ENCODE measurements at regions of chr20 and their contacts with region 1.

Region 1: DNA sequence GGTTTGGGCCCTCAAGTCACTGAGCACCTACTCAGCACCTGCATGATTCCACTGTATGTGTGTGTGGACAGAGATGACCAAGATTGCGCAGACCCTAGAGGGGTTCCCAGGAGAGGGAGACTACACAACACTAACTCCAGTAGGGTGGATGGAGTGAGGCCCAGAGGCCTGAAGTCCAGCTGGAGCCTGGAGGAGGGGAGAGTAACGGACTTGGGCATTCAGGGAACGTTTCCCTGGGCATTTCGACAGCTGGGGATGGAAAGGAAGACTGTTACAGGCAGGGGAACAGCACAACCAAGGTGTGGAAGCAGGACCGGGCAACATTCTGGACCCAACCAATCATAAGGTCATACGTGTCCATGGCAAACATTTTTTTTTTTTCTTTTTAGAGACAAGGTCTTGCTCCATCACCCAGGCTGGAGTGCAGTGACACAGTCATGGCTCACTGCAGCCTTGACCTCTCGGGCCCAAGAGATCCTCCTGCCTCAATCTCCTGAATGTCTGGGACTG is 11.1 kb upstream of the CEBPB start:
- DNase-seq: no peak
- H3K4me3 ChIP-seq: no peak overlapping the region
- H3K27ac ChIP-seq: no peak overlapping the region
- H3K4me1 ChIP-seq: no peaks in the 10 kb centered on the region
- H3K27me3 ChIP-seq: no peaks in the 10 kb centered on the region
- CTCF ChIP-seq: no peak
- POLR2A ChIP-seq: no peak

Region 2: GRCh38 chr20:50115591-50116372 is 63.8 kb before region 1 on chr20:
- CTCF ChIA-PET with region 1: interaction called, 129 read pairs
- POLR2A ChIA-PET with region 1: no interaction called
- dilution Hi-C with region 1: no loop called
- intact Hi-C with region 1: no loop called
- DNase-seq: peak; percentile 98
- H3K4me3 ChIP-seq: peak overlapping the region; percentile 51 to 80 (median 63)
- H3K27ac ChIP-seq: peak overlapping the region; percentile 30
- H3K4me1 ChIP-seq: peaks cover 34% of the 10 kb centered on the region
- H3K27me3 ChIP-seq: no peaks in the 10 kb centered on the region
- CTCF ChIP-seq: no peak
- POLR2A ChIP-seq: peak; percentile 79

Measured in endothelial cell of umbilical vein (primary cell).